ENCODE measurements at regions of chr9 and their contacts with region 1.

Region 1: DNA sequence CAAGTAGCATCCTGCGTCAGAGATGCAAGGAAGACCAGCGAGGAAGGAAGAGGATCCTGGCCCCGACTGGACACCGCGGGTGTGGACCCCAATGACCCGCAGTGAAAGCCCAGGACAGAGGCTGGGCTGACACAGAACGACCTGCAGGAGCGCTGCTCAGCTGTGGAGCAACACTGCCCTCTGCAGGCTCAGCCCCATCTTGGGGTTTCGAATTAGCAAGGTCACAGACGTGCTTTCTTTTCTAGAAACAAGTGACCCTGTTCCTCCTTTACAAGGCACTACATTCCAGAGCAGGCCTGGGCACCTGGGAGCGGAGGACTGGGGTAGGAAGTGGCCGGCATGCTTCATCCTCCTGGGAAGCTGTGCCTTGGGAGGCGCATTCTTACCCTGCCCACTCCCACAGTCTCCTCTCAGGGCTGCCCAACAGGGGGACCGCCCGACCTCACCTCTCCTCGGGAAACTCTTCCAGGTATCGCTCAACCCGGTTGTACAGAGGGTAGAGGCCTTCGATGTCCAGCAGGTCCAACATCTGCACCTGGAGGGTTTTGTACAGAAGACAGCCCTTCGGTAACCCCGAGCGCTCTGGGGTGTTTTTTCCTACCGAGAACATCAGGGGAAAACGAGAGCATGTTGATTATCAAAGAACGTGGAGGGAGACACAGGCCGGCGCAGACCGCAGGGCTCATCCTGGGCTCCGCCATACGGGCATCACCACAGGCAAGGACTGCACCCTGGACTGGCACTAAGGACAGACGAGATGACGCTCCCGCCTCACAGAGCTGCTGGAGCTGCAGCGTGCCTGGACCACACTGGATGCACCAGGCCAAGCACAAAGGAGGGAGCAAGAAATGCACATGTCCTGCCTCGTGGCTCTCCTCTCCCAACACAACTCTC is 35.0 kb downstream of the IPPK start:
- DNase-seq: peak; percentile 76
- H3K4me3 ChIP-seq: no peak overlapping the region
- H3K27ac ChIP-seq: peak overlapping the region; percentile 63
- H3K4me1 ChIP-seq: peaks cover 18% of the 10 kb centered on the region
- H3K27me3 ChIP-seq: no peaks in the 10 kb centered on the region
- CTCF ChIP-seq: peak; percentile 93

Region 2: DNA sequence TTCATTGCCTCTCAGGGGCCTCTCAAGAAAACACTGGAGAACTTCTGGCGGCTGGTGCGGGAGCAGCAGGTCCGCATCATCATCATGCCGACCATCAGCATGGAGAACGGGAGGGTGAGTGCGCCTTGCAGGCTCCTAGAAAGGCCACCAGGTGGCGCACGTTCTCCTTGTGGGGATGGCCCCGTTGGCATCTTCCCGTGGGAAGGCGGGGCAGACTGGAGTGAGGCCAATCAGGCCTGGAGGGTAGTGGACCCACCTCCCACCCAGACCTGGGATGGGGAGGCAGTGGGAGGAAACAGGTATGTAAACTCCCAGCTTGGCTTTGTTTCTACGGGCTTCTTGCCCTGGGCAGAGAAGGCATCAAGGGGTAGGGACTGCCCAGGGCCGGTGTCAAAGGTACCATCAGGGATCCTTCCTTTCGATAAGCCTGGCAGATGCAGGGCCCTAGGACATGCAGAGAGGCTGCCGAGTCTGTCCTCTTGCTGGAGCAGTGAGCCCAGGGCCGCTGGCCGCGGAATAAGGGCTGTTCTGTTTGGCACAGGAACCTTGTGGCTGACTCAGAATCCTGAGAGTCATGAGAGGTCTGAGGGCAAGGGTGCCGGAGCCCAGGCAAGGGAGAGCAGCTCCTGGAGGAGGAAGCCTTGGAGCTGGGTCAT is 500.9 kb before region 1 on chr9:
- intact Hi-C with region 1: loop called (anchors 10 kb)
- DNase-seq: peak; percentile 79
- H3K4me3 ChIP-seq: no peak overlapping the region
- H3K27ac ChIP-seq: no peak overlapping the region
- H3K4me1 ChIP-seq: no peaks in the 10 kb centered on the region
- H3K27me3 ChIP-seq: peaks cover 27% of the 10 kb centered on the region
- CTCF ChIP-seq: peak; percentile 91

Region 3: GRCh38 chr9:92325269-92325990 is 309.5 kb before region 1 on chr9 and contains the starts of genes CENPP and NOL8:
- intact Hi-C with region 1: loop called (anchors 10 kb)
- DNase-seq: peak; percentile 82
- H3K4me3 ChIP-seq: peak within 1 kb of the TSS; percentile 88
- H3K27ac ChIP-seq: peak within 1 kb of the TSS; percentile 97
- H3K4me1 ChIP-seq: peaks cover 40% of the 10 kb centered on the region
- H3K27me3 ChIP-seq: no peaks in the 10 kb centered on the region
- CTCF ChIP-seq: no peak
- total RNA-seq, gene CENPP: 5.4 TPM
- total RNA-seq, gene NOL8: 12.7 TPM

Measured in left ventricle myocardium inferior (tissue), 1 donor.